CD4-positive, alpha-beta memory T cell (primary cell): ENCODE measurements at regions of chr4 and their contacts with region 1.

Region 1: DNA sequence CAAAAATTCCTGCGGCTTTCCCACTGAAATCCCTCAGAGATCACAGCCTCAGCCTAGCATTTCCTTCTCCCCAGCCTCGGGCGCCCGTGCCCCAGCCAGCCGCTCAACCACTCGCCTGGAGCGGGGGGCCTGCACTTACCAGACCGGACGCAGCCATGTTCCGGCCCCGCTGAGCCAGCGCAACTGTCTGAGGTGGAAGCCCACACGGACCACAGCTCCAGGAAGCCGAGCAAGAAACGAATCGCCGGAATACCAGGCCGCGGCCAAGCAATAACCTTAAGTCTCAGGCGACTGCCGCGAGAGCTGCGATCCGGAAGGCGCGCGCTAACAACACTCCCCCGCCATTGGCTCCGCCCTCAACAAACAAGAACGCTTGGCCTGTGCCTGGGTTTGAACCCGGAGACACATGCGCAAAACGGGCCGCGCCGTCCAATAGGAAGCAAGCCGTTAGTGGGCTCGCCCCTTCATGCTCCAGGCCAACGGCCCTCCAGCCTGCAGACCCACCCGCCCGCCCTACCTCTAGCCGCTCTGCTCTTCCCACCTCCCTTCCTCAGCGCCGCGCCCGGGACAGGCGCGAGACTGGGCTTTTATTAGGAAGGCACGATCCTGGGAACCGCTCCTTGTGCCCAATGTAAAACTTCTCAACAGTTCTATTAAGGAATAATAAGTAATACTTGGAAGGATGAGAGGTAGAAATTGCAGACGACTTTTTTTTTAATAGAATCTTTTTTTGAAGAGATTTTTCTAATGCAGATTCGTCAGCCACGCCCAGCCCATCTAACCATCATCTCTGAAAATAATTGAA is at the start of gene CENPC:
- DNase-seq: peak; percentile 86 to 94 (median 90)
- H3K4me3 ChIP-seq: peak within 1 kb of the TSS; percentile 82 to 85
- H3K4me3 Mint-ChIP-seq: peak within 1 kb of the TSS; percentile 97 to 99 (median 99)
- H3K27ac ChIP-seq: peak within 1 kb of the TSS; percentile 95
- H3K27ac Mint-ChIP-seq: peak within 1 kb of the TSS; percentile 99 to 100 (median 100)
- H3K4me1 ChIP-seq: peaks cover 29% of the 10 kb centered on the region
- H3K4me1 Mint-ChIP-seq: peaks cover 24 to 42% (median 35%) of the 10 kb centered on the region in 4 donors
- H3K27me3 ChIP-seq: no peaks in the 10 kb centered on the region
- H3K27me3 Mint-ChIP-seq: no peaks in the 10 kb centered on the region
- total RNA-seq, gene CENPC: 64.0 to 69.1 TPM

Region 2: GRCh38 chr4:66524781-66525180 is 1020.6 kb before region 1 on chr4:
- CTCF ChIA-PET with region 1: no interaction called
- POLR2A ChIA-PET with region 1: no interaction called
- intact Hi-C with region 1: no loop called
- DNase-seq: no peak
- H3K4me3 ChIP-seq: no peak overlapping the region
- H3K4me3 Mint-ChIP-seq: no peak overlapping the region
- H3K27ac ChIP-seq: no peak overlapping the region
- H3K27ac Mint-ChIP-seq: no peak overlapping the region
- H3K4me1 ChIP-seq: no peaks in the 10 kb centered on the region
- H3K4me1 Mint-ChIP-seq: no peaks in the 10 kb centered on the region
- H3K27me3 ChIP-seq: no peaks in the 10 kb centered on the region
- H3K27me3 Mint-ChIP-seq: no peaks in the 10 kb centered on the region

Region 3: GRCh38 chr4:67401902-67402301 is 143.5 kb before region 1 on chr4:
- CTCF ChIA-PET with region 1: no interaction called
- POLR2A ChIA-PET with region 1: no interaction called
- intact Hi-C with region 1: no loop called
- DNase-seq: no peak
- H3K4me3 ChIP-seq: no peak overlapping the region
- H3K4me3 Mint-ChIP-seq: no peak overlapping the region
- H3K27ac ChIP-seq: no peak overlapping the region
- H3K27ac Mint-ChIP-seq: no peak overlapping the region
- H3K4me1 ChIP-seq: no peaks in the 10 kb centered on the region
- H3K4me1 Mint-ChIP-seq: no peaks in the 10 kb centered on the region
- H3K27me3 ChIP-seq: no peaks in the 10 kb centered on the region
- H3K27me3 Mint-ChIP-seq: no peaks in the 10 kb centered on the region

Region 4: GRCh38 chr4:67451464-67451863 is 93.9 kb before region 1 on chr4:
- CTCF ChIA-PET with region 1: no interaction called
- POLR2A ChIA-PET with region 1: no interaction called
- intact Hi-C with region 1: no loop called
- DNase-seq: no peak
- H3K4me3 ChIP-seq: no peak overlapping the region
- H3K4me3 Mint-ChIP-seq: no peak overlapping the region
- H3K27ac ChIP-seq: no peak overlapping the region
- H3K27ac Mint-ChIP-seq: no peak overlapping the region
- H3K4me1 ChIP-seq: no peaks in the 10 kb centered on the region
- H3K4me1 Mint-ChIP-seq: peaks cover 0 to 3% (median 0%) of the 10 kb centered on the region in 4 donors
- H3K27me3 ChIP-seq: no peaks in the 10 kb centered on the region
- H3K27me3 Mint-ChIP-seq: no peaks in the 10 kb centered on the region

Region 5: DNA sequence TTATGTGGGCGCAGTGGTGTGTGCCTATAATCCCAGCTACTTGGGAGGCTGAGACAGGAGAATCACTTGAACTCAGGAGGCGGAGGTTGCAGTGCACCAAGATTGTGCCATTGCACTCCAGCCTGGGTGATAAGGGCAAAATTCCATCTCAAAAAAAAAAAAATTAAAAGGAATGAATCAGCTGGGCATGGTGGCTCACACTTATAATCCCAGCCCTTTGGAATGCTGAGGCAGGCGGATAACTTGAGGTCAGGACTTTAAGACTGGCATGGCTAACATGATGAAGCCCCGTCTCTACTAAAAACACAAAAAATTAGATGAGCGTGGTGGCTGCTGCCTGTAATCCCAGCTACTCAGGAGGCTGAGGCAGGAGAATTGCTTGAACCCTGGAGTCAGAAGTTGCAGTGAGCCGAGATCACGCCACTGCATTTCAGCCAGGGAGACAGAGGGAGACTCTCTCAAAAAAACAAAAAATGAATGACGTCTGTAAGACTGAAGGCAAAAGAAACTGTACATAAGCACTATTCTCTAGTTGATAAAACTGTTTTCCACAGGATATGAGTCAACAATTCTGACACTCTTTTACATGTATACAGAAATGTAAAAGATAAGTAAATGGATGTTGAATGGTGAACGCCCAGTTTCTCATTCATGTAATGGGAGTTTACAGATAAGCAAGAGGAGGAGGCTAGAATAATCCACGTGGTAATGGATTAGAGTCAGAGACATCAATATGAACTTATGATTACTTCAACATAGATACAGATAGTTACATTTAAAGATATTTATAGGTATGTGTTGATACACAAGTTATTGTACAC is 22.3 kb before region 1 on chr4:
- CTCF ChIA-PET with region 1: no interaction called
- POLR2A ChIA-PET with region 1: no interaction called
- intact Hi-C with region 1: loop called (anchors 2 kb)
- DNase-seq: peak in 2 of 5 donors; percentile 13 to 27
- H3K4me3 ChIP-seq: no peak overlapping the region
- H3K4me3 Mint-ChIP-seq: peak overlapping the region in 4 of 8 donors; percentile 1 to 55 (median 36)
- H3K27ac ChIP-seq: no peak overlapping the region
- H3K27ac Mint-ChIP-seq: peak overlapping the region in 5 of 7 donors; percentile 10 to 82 (median 79)
- H3K4me1 ChIP-seq: peaks cover 48% of the 10 kb centered on the region
- H3K4me1 Mint-ChIP-seq: peaks cover 46 to 72% (median 65%) of the 10 kb centered on the region in 4 donors
- H3K27me3 ChIP-seq: no peaks in the 10 kb centered on the region
- H3K27me3 Mint-ChIP-seq: no peaks in the 10 kb centered on the region

Region 6: GRCh38 chr4:67624939-67625338 is 79.5 kb after region 1 on chr4:
- CTCF ChIA-PET with region 1: interaction called, 4 read pairs
- POLR2A ChIA-PET with region 1: no interaction called
- intact Hi-C with region 1: loop called (anchors 1 kb)
- DNase-seq: no peak
- H3K4me3 ChIP-seq: no peak overlapping the region
- H3K4me3 Mint-ChIP-seq: no peak overlapping the region
- H3K27ac ChIP-seq: no peak overlapping the region
- H3K27ac Mint-ChIP-seq: no peak overlapping the region
- H3K4me1 ChIP-seq: no peaks in the 10 kb centered on the region
- H3K4me1 Mint-ChIP-seq: no peaks in the 10 kb centered on the region
- H3K27me3 ChIP-seq: no peaks in the 10 kb centered on the region
- H3K27me3 Mint-ChIP-seq: no peaks in the 10 kb centered on the region

Region 7: GRCh38 chr4:67746797-67747495 is 201.5 kb after region 1 on chr4:
- CTCF ChIA-PET with region 1: interaction called, 10 read pairs
- POLR2A ChIA-PET with region 1: interaction called, 3 read pairs
- intact Hi-C with region 1: loop called (anchors 1 kb)
- DNase-seq: peak in 4 of 5 donors; percentile 24 to 40 (median 28)
- H3K4me3 ChIP-seq: no peak overlapping the region
- H3K4me3 Mint-ChIP-seq: no peak overlapping the region
- H3K27ac ChIP-seq: no peak overlapping the region
- H3K27ac Mint-ChIP-seq: peak overlapping the region in 1 of 7 donors; percentile 8
- H3K4me1 ChIP-seq: no peaks in the 10 kb centered on the region
- H3K4me1 Mint-ChIP-seq: peaks cover 0 to 2% (median 0%) of the 10 kb centered on the region in 4 donors
- H3K27me3 ChIP-seq: no peaks in the 10 kb centered on the region
- H3K27me3 Mint-ChIP-seq: no peaks in the 10 kb centered on the region

Region 8: DNA sequence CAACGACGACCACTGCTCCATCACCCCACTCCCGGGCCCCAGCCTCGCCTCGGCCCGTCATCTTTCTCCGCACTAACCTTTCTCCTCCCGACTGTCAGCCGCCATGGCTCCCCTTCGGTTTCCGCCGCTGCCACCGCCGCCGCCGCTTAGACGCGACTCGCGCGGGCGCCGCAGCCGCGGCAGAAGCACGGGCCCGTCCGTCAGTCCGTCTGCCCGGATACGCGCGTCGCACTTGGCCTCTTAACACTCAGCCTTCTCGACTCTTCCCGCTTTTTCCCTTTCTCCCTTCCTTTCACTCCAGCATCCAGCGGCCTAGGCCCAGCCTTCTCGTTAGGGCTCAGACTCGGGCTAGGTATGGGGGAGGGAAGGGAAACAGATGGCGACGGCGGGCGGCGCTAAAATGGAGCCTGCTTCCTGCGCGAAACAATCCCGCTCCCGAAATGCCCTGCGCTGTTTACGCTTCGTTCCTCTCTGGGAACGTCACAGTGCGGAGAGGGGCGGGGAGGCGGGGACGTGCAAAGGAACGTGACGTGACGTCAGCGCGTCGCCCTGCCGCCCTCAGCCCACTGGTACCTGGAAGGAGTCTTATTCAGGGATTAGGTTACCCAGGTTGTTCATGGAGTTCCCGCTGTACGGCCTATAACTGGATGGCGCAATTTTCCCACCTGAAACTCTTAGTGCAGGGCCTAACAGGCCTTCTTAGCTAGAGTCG is 804.4 kb after region 1 on chr4 and contains the start of gene YTHDC1:
- CTCF ChIA-PET with region 1: no interaction called
- POLR2A ChIA-PET with region 1: no interaction called
- intact Hi-C with region 1: loop called (anchors 1 kb)
- DNase-seq: peak; percentile 93 to 97 (median 94)
- H3K4me3 ChIP-seq: peak within 1 kb of the TSS; percentile 79 to 89
- H3K4me3 Mint-ChIP-seq: peak within 1 kb of the TSS; percentile 96 to 100 (median 98)
- H3K27ac ChIP-seq: peak within 1 kb of the TSS; percentile 96
- H3K27ac Mint-ChIP-seq: peak within 1 kb of the TSS; percentile 99 to 100 (median 100)
- H3K4me1 ChIP-seq: peaks cover 47% of the 10 kb centered on the region
- H3K4me1 Mint-ChIP-seq: peaks cover 28 to 52% (median 36%) of the 10 kb centered on the region in 4 donors
- H3K27me3 ChIP-seq: no peaks in the 10 kb centered on the region
- H3K27me3 Mint-ChIP-seq: peaks cover 0 to 2% of the 10 kb centered on the region in 2 donors
- total RNA-seq, gene YTHDC1: 187 to 201 TPM